ENCODE measurements at regions of chr2 and their contacts with region 1.

Region 1: DNA sequence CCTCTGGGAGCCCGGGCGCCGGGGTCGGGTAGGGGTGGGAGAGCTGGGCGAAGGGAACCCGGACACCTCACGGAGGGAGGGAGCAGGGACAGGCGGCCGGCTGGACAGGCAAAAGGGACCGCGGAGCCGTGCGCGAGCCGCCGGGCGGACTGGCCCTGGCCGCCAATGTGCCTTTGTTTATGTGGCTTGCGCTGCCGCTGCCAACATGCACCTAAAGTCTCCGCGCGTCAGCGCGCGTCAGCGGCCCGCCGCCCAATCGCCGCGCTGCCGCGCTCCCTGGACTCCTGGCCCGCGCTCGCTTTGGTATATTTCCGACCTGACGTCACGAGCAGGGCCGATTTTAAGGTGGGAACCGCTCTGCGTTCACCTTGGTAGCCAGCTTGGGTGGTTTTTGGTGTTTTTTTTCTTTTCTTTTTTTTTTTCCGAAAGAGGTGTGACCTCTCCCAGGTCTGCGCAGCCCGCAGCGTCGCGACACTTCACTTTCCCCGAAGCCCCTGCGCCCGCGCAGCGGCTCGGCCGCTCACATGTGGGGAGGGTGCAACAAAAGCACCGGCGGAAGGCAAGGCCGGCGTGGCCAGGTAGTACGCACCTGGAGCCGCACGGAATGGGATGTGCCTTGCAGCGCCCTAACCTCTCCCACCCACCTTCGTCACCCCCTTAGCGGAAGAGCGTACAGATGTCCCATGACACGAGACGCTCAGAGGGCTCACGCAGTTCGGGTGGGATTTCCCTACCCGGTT is at the start of gene NR4A2:
- DNase-seq: peak; percentile 82 to 98 (median 89)
- ATAC-seq: peak; percentile 60
- H3K4me3 ChIP-seq: peak within 1 kb of the TSS; percentile 83 to 88
- H3K4me3 Mint-ChIP-seq: peak within 1 kb of the TSS; percentile 90
- H3K27ac ChIP-seq: peak within 1 kb of the TSS; percentile 91 to 99
- H3K27ac Mint-ChIP-seq: peak within 1 kb of the TSS; percentile 98
- H3K4me1 ChIP-seq: peaks cover 33% of the 10 kb centered on the region
- H3K4me1 Mint-ChIP-seq: peaks cover 44% of the 10 kb centered on the region
- H3K27me3 ChIP-seq: peaks cover 0 to 6% of the 10 kb centered on the region in 2 experiments
- H3K27me3 Mint-ChIP-seq: peaks cover 23% of the 10 kb centered on the region
- CTCF ChIP-seq: no peak
- total RNA-seq, gene NR4A2: 777 to 796 TPM

Region 2: GRCh38 chr2:156322051-156322685 is 10.5 kb before region 1 on chr2:
- CTCF ChIA-PET with region 1: interaction called, 7 read pairs
- POLR2A ChIA-PET with region 1: interaction called, 11 read pairs
- intact Hi-C with region 1: loop called in 1 of 2 experiments (anchors 1 kb)
- DNase-seq: peak in 4 of 9 experiments; percentile 22 to 69 (median 40)
- ATAC-seq: peak; percentile 12
- H3K4me3 ChIP-seq: peak overlapping the region; percentile 1 to 34
- H3K4me3 Mint-ChIP-seq: peak overlapping the region; percentile 63
- H3K27ac ChIP-seq: no peak overlapping the region
- H3K27ac Mint-ChIP-seq: peak overlapping the region; percentile 11
- H3K4me1 ChIP-seq: peaks cover 34% of the 10 kb centered on the region
- H3K4me1 Mint-ChIP-seq: peaks cover 43% of the 10 kb centered on the region
- H3K27me3 ChIP-seq: peaks cover 26 to 34% of the 10 kb centered on the region in 2 experiments
- H3K27me3 Mint-ChIP-seq: peaks cover 83% of the 10 kb centered on the region
- CTCF ChIP-seq: no peak

Region 3: DNA sequence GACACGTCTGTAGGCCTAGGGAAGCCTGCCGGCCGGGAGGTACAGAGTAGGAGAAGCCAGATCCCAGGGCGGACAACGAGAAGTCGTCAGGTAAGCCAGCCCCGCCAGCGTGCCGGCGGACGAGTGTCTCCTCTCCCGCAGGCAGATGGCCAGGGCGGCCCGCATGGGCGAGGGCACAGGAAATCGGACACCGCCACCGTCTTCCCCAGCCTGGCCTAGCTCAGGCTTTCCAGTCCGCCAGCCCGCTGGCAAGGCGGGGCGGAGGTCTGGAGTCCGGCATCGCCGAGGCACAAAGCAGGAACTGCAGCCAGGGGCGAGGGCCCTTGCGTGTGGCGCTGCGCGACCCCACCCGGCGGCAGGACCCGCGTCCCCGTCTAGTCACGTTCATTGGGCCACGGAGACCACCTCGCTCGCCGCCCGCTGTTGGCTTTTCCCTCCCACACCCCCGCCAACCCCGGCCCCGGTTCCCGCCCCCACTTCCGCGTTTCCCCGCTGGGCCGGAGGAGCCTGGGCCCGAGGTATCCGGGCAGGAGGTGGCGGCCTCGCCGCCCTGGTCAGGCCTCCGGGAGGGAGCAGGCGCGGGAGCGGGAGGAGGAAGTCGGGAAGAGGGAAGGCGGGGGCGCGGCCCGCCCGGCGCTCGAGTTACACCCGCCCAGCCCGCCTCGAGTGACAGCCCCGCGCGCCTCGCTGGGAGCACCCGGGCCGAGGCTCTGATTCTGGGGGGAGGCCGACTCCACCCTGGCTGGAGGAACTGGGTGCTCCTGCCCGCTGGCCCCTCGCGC is 103.2 kb after region 1 on chr2 and contains the start of gene GPD2:
- CTCF ChIA-PET with region 1: interaction called, 3 read pairs
- POLR2A ChIA-PET with region 1: interaction called, 18 read pairs
- intact Hi-C with region 1: loop called in 1 of 2 experiments (anchors 1 kb)
- DNase-seq: peak; percentile 12 to 78 (median 65)
- ATAC-seq: peak; percentile 69
- H3K4me3 ChIP-seq: peak within 1 kb of the TSS; percentile 70 to 81
- H3K4me3 Mint-ChIP-seq: peak within 1 kb of the TSS; percentile 99
- H3K27ac ChIP-seq: peak within 1 kb of the TSS; percentile 44 to 78
- H3K27ac Mint-ChIP-seq: peak within 1 kb of the TSS; percentile 98
- H3K4me1 ChIP-seq: peaks cover 21% of the 10 kb centered on the region
- H3K4me1 Mint-ChIP-seq: peaks cover 39% of the 10 kb centered on the region
- H3K27me3 ChIP-seq: no peaks in the 10 kb centered on the region
- H3K27me3 Mint-ChIP-seq: no peaks in the 10 kb centered on the region
- CTCF ChIP-seq: no peak
- total RNA-seq, gene GPD2: 4.7 to 6.9 TPM

Region 4: GRCh38 chr2:156589381-156590079 is 256.8 kb after region 1 on chr2:
- CTCF ChIA-PET with region 1: interaction called, 18 read pairs
- POLR2A ChIA-PET with region 1: no interaction called
- intact Hi-C with region 1: loop called (anchors 1 kb)
- DNase-seq: peak in 6 of 9 experiments; percentile 2 to 67 (median 20)
- ATAC-seq: peak; percentile 63
- H3K4me3 ChIP-seq: no peak overlapping the region
- H3K4me3 Mint-ChIP-seq: no peak overlapping the region
- H3K27ac ChIP-seq: no peak overlapping the region
- H3K27ac Mint-ChIP-seq: no peak overlapping the region
- H3K4me1 ChIP-seq: no peaks in the 10 kb centered on the region
- H3K4me1 Mint-ChIP-seq: peaks cover 2% of the 10 kb centered on the region
- H3K27me3 ChIP-seq: no peaks in the 10 kb centered on the region
- H3K27me3 Mint-ChIP-seq: no peaks in the 10 kb centered on the region
- CTCF ChIP-seq: peak; percentile 87

Region 5: GRCh38 chr2:157468931-157469708 is 1136.4 kb after region 1 on chr2:
- CTCF ChIA-PET with region 1: no interaction called
- POLR2A ChIA-PET with region 1: no interaction called
- intact Hi-C with region 1: loop called in 1 of 2 experiments (anchors 5 kb)
- DNase-seq: peak in 2 of 9 experiments; percentile 70 to 85
- ATAC-seq: peak; percentile 87
- H3K4me3 ChIP-seq: peak overlapping the region in 1 of 2 experiments; percentile 2
- H3K4me3 Mint-ChIP-seq: peak overlapping the region; percentile 57
- H3K27ac ChIP-seq: peak overlapping the region; percentile 67 to 73
- H3K27ac Mint-ChIP-seq: peak overlapping the region; percentile 96
- H3K4me1 ChIP-seq: peaks cover 43% of the 10 kb centered on the region
- H3K4me1 Mint-ChIP-seq: peaks cover 67% of the 10 kb centered on the region
- H3K27me3 ChIP-seq: no peaks in the 10 kb centered on the region
- H3K27me3 Mint-ChIP-seq: no peaks in the 10 kb centered on the region
- CTCF ChIP-seq: no peak

Measured in CD8-positive, alpha-beta T cell (primary cell).